Left cardiac atrium (tissue), 4 donors: ENCODE measurements at regions of chr5 and their contacts with region 1.

Region 1: GRCh38 chr5:66324357-66324756 is 180.3 kb downstream of the SREK1 start:
- DNase-seq: peak; percentile 58
- ATAC-seq: peak; percentile 84 to 86

Region 2: DNA sequence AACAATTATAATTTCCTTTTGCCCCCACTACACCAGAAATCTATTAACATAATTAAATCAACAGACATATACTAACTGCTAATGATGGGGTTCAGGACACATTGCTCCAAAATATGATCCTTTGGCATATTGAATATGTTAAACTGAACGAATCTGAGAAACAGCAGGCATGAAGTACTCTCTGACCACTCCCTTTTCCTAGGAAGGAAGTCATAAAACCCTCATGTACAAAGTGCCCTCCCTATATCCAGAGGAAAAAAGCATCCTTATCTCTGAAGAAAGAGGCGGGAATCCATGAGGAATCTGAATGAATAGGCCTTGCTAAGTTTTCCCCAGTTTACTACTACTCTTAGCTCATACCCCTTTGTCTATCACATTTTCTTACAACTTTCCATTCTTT is 910.5 kb before region 1 on chr5:
- intact Hi-C with region 1: no loop called
- DNase-seq: no peak
- ATAC-seq: no peak

Region 3: DNA sequence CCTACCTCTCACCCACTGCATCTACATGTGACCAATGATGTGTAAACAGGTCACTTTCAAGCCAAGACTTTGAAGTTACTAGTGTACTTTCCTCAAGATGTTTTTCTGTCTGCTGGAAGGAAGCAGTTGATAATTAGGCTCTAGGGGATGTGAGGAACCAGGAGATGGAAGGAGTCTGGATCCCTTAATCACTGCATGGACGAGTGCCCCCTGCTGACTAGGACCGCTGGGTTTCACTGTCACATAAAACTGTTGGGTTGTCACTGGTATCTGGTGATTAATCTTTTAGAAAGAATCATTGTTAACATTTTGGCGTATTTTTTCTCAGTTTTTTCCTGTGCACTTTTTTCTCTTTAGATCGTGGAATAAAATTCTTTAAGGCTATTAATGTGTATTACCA is 100.7 kb before region 1 on chr5:
- intact Hi-C with region 1: no loop called
- DNase-seq: no peak
- ATAC-seq: no peak

Region 4: GRCh38 chr5:66247176-66247960 is 77.0 kb before region 1 on chr5:
- intact Hi-C with region 1: no loop called
- DNase-seq: no peak
- ATAC-seq: peak in 1 of 2 donors; percentile 49

Region 5: DNA sequence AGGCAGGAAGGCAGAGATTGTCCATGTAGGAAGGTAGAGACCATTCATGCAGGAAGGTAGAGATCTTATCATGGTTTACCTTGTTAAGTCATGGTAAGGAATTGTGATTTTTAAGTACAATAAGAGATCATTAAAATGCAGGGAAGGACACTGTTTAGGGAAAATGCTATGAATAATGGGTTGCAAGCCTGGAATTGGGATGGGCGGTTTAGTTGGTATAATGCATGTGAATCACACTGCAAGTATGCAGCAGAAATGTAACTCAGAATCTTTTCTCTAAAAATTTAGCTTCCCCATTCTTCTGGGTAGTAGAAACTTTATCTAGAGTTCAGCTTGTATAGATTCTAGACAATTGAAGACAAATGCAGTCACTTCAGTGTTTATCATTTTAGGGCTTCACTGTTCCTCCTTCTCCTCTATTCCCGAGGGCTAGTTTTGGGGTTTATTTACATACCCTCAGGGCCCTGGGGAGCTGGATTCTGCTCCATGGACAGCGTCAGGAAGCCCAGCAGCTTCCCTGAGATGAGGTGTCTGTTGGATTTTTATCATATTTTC is 31.7 kb after region 1 on chr5:
- intact Hi-C with region 1: no loop called
- DNase-seq: no peak
- ATAC-seq: peak; percentile 8 to 40

Region 6: DNA sequence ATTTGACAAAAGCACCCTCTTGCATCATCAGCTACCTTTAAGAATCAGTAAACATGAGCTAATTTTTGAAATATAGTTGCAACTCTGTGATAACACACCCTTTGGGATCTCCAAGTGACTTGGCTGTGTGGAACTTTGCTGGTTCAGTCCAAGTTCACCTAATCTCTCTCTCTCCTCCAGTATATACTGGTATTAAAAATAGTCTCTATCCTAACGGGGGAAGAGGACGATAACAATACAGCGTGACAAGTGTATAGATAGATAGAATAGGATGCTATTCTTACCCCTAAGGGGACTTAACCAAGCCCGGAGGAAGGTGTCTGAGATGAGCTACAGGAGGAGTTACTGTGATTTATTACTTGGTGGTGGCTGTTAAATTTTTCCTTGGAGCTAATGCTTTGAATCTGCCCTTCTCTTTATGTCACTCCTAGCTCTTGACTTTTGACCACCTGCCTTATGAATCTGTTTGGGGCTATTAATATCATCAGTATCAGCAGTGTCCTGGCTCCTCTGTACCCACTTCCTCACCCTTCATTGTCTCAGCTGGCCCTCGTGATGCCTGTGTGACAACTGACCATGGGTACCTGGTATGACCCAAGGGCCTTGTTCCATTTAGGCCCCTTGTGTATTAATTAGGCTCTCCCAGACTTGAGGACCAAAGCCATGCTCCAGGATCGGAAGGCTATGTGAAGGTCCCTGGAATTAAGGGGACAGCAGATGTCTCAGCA is 43.6 kb after region 1 on chr5:
- intact Hi-C with region 1: loop called in 1 of 2 experiments (anchors 5 kb)
- DNase-seq: peak; percentile 44
- ATAC-seq: peak; percentile 83 to 89

Region 7: DNA sequence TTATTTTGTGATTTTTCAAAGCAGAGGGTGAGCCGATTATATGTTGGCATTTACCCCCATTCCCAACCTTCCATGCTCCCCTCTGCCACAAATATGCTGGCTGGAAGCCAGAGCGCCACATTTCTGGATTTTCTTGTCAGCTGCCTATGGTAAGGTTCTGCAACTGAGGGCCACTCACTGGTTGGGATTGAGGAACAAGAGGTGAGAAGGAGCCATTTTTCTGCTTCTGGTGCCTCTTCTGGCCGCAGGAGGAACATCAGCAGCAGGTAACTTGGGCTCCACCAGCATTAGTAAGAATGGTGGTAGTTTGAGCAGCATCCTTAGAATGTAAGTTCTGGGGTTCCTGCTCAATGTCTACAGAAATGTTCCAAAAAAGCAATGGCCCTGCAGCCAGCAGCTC is 112.4 kb after region 1 on chr5:
- intact Hi-C with region 1: loop called in 1 of 2 experiments (anchors 5 kb)
- DNase-seq: peak; percentile 26
- ATAC-seq: no peak

Region 8: DNA sequence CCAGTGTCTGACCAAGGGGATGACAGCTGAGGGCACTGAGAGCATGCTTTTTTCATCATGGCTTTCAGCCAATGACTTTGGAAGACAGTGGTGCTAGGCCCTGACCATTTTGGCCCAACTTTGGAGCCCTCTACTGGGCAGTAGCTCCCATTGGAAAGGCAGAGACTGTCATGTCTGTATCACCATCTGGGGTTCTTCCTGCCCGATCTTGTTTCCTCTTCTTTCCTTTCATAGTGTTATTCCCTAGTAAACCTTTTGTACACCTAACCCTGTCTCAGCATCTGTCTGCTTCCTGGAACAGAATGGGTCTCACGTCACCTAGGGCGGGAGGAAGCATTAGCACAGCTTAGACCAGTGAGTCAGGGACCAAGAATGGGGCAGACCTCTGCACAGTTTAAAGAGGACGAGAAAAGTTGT is 174.4 kb after region 1 on chr5:
- intact Hi-C with region 1: loop called in 1 of 2 experiments (anchors 5 kb)
- DNase-seq: peak; percentile 19
- ATAC-seq: peak; percentile 92 to 97